ENCODE measurements at regions of chr15 and their contacts with region 1.

Region 1: GRCh38 chr15:67839929-67840748 is at the start of gene RNU6-1:
- DNase-seq: peak; percentile 95
- H3K4me3 ChIP-seq: peak within 1 kb of the TSS; percentile 81
- H3K27ac ChIP-seq: peak within 1 kb of the TSS; percentile 75
- H3K4me1 ChIP-seq: peaks cover 18% of the 10 kb centered on the region
- H3K27me3 ChIP-seq: peaks cover 12% of the 10 kb centered on the region
- CTCF ChIP-seq: no peak
- total RNA-seq, gene RNU6-1: not detected in 2 replicates

Region 2: GRCh38 chr15:66946578-66947164 is 893.5 kb before region 1 on chr15:
- CTCF ChIA-PET with region 1: interaction called, 3 read pairs
- POLR2A ChIA-PET with region 1: no interaction called
- intact Hi-C with region 1: loop called (anchors 2 kb)
- DNase-seq: peak; percentile 74
- H3K4me3 ChIP-seq: peak overlapping the region; percentile 20
- H3K27ac ChIP-seq: no peak overlapping the region
- H3K4me1 ChIP-seq: no peaks in the 10 kb centered on the region
- H3K27me3 ChIP-seq: no peaks in the 10 kb centered on the region
- CTCF ChIP-seq: peak; percentile 92

Region 3: GRCh38 chr15:67303490-67304363 is 536.4 kb before region 1 on chr15:
- CTCF ChIA-PET with region 1: no interaction called
- POLR2A ChIA-PET with region 1: no interaction called
- intact Hi-C with region 1: loop called (anchors 5 kb)
- DNase-seq: peak; percentile 17
- H3K4me3 ChIP-seq: no peak overlapping the region
- H3K27ac ChIP-seq: no peak overlapping the region
- H3K4me1 ChIP-seq: peaks cover 13% of the 10 kb centered on the region
- H3K27me3 ChIP-seq: no peaks in the 10 kb centered on the region
- CTCF ChIP-seq: peak; percentile 54

Region 4: DNA sequence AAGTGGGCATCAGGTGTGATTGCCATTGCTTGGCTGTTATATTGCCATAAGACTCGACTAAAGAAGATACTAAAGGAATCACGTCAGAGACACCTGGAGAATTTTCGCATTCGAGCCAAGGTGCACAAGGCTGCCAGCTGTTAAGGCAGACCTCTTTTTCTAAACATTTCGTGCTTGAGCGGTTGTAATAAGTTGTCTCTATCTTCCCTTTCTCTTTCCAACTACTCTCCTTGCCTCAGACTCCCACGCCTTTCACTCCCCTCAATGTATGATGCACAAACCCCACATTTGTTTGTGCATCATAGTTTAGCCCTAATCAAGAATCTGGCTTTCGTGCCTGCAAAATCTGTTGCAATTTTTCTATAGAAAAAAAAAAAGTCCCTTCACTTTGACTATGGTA is 467.6 kb before region 1 on chr15:
- CTCF ChIA-PET with region 1: no interaction called
- POLR2A ChIA-PET with region 1: no interaction called
- intact Hi-C with region 1: loop called (anchors 10 kb)
- DNase-seq: no peak
- H3K4me3 ChIP-seq: no peak overlapping the region
- H3K27ac ChIP-seq: no peak overlapping the region
- H3K4me1 ChIP-seq: peaks cover 7% of the 10 kb centered on the region
- H3K27me3 ChIP-seq: no peaks in the 10 kb centered on the region
- CTCF ChIP-seq: no peak

Region 5: DNA sequence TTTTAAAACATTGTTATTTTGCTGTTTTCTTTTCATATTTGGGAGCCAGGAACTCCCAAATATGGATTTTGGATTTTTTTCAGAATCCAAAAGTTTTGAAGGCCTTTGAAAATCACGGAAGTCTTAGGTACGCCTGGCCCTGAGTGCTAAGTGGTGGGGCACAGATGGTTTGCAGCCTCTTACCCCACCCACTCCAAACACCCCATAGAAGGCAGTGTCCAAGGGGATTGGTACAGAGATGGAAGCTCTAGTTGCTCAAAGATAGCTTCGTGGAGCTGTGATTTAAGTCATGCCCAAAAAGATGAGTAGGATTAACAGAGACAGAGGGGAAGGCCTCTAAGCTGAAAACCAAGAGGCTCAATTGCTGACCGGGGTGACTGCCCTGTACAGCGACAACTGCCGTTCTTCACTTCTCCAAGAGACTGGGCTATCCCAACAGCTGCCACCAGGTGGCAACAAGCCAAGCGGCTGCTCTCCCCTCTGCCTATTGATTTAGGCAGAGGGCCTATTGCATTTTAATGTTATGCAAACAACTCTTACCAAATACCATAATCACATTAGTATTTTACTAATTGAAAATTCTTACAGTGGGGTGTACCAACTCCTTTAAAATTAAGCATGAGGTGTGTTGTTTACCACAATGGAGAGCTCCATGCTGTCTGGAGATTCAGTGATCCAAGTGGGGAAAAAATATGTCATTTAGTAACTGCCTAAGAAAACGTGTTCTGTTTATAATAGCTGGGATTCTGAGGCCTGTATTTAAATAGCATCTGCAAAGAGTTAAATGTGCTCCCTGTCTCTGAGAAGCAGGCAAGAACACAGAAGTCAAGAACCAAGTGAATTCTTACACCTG is 383.2 kb before region 1 on chr15:
- CTCF ChIA-PET with region 1: interaction called, 11 read pairs
- POLR2A ChIA-PET with region 1: no interaction called
- intact Hi-C with region 1: loop called (anchors 1 kb)
- DNase-seq: peak; percentile 80
- H3K4me3 ChIP-seq: no peak overlapping the region
- H3K27ac ChIP-seq: no peak overlapping the region
- H3K4me1 ChIP-seq: peaks cover 3% of the 10 kb centered on the region
- H3K27me3 ChIP-seq: no peaks in the 10 kb centered on the region
- CTCF ChIP-seq: peak; percentile 96

Region 6: GRCh38 chr15:67548862-67549651 is 291.1 kb before region 1 on chr15:
- CTCF ChIA-PET with region 1: no interaction called
- POLR2A ChIA-PET with region 1: no interaction called
- intact Hi-C with region 1: no loop called
- DNase-seq: peak; percentile 98
- H3K4me3 ChIP-seq: peak overlapping the region; percentile 34
- H3K27ac ChIP-seq: peak overlapping the region; percentile 68
- H3K4me1 ChIP-seq: peaks cover 26% of the 10 kb centered on the region
- H3K27me3 ChIP-seq: no peaks in the 10 kb centered on the region
- CTCF ChIP-seq: no peak

Region 7: DNA sequence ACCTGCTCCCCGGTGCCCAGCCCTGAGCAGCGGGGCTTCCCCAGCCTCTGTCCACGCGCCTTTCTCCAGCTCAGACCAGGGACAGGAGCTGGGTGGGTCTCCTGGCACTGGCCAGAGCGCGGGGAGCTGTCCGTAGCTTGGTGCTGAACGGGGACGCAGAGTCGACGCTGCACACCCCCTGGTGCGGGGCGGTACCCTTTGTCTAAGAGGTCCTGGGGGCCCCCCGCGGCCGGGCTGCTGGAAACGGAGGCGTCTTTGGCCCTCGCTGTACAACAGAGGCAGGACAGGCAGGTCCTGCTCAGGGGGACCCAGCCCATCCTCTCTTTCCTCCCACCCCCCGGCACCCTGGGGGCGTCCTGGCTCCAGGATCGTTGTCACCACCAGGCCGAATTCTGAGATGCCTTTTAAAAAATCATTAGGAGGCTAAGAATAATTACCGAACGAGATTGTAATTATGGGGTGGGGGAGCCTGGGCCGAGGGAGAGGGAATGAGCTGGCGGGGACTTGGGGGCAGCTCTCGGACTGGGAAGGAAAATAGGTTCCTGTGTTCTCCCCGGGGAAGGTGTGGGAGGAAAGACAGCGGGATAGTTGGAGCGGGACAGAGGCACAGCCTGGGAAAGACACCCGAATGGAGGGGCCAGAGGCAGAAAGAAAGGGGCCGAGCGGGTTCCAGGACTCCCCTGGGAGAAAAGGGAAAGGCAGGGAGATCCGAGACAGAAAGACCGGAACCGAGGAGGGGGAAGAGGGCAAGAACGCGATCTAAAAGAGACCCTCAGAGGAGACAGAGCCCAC is 19.0 kb before region 1 on chr15:
- CTCF ChIA-PET with region 1: no interaction called
- POLR2A ChIA-PET with region 1: no interaction called
- intact Hi-C with region 1: no loop called
- DNase-seq: no peak
- H3K4me3 ChIP-seq: no peak overlapping the region
- H3K27ac ChIP-seq: no peak overlapping the region
- H3K4me1 ChIP-seq: peaks cover 26% of the 10 kb centered on the region
- H3K27me3 ChIP-seq: peaks cover 77% of the 10 kb centered on the region
- CTCF ChIP-seq: no peak